ENCODE measurements at regions of chr15 and their contacts with region 1.

Region 1: DNA sequence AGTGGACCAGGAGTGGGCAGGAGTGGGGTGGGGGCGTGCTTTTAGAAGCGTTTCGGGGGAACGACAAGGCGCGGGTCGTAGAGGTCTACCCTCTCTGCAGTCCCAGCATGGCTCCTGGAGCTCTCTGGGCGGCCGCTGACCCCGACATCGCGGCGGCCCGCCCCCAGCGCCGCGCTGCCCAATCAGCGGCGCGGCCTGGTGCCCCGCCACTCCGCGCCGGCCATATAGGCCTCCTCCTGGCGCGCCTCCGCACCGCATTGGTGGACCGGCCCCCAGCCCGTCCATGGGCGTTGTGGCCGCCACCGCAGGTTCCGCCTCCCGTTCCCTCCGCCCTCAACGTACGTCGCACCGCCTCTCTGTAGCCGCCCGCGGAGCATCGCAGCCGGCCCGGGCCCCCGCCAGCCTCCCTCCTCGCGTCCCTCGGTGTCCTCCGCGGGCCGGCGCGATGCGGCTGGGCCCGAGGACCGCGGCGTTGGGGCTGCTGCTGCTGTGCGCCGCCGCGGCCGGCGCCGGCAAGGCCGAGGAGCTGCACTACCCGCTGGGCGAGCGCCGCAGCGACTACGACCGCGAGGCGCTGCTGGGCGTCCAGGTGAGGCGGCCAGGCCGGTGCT is at the start of gene RCN2:
- DNase-seq: peak; percentile 84 to 96 (median 91)
- ATAC-seq: peak; percentile 98
- H3K4me3 ChIP-seq: peak within 1 kb of the TSS; percentile 59
- H3K4me3 Mint-ChIP-seq: peak within 1 kb of the TSS; percentile 98
- H3K27ac ChIP-seq: peak within 1 kb of the TSS in 1 of 2 donors; percentile 53
- H3K27ac Mint-ChIP-seq: peak within 1 kb of the TSS; percentile 91
- H3K4me1 ChIP-seq: peaks cover 6% of the 10 kb centered on the region
- H3K4me1 Mint-ChIP-seq: peaks cover 41% of the 10 kb centered on the region
- H3K27me3 ChIP-seq: no peaks in the 10 kb centered on the region
- H3K27me3 Mint-ChIP-seq: peaks cover 1% of the 10 kb centered on the region
- CTCF ChIP-seq: no peak
- total RNA-seq, gene RCN2: 18.1 to 19.1 TPM

Region 2: DNA sequence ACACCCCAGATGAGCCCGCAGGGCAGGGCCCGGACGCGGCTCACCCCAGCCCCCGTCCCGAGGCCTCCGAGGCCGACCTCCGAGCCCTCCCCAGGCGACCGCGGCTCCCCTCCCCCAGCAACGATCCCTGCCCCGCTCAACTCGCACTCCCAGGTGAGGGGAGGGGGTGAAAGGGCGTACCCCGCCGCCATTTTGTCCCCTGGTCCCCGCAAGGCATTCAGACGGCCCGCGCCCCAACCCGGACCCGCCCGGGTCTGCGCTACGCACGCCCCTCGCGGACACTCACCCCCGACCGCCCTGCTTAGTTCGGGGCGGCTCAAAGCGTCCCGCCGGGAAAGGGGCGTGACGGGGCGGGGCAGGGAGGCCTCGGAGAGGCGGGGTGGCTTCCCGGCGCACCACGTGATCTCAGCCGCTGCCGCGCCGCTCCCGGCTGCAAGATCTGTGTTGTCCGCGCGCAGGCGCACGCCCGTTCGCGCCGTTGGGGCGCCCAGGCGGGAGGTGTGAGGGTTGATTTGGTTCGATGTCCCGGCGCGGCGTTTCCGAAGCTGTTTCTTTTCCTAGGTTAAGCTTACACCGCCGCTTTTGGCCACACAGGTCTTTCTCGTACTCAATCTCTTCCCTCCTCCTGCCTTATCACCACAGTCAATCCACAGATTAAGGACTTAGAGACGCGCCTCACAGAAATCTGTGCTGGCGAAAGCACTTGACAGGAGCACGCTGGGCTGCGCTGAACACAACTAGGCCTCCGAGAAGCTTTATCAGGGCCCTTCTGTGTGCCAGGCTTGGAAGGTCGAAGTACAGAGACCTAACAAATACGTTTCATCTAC is 26.3 kb before region 1 on chr15 and contains the start of gene SCAPER:
- CTCF ChIA-PET with region 1: no interaction called
- POLR2A ChIA-PET with region 1: interaction called, 51 read pairs
- intact Hi-C with region 1: loop called (anchors 1 to 2 kb)
- DNase-seq: peak; percentile 77 to 96 (median 90)
- ATAC-seq: peak; percentile 89
- H3K4me3 ChIP-seq: peak within 1 kb of the TSS; percentile 83
- H3K4me3 Mint-ChIP-seq: peak within 1 kb of the TSS; percentile 96
- H3K27ac ChIP-seq: peak within 1 kb of the TSS; percentile 60 to 75
- H3K27ac Mint-ChIP-seq: peak within 1 kb of the TSS; percentile 95
- H3K4me1 ChIP-seq: peaks cover 25% of the 10 kb centered on the region
- H3K4me1 Mint-ChIP-seq: peaks cover 31% of the 10 kb centered on the region
- H3K27me3 ChIP-seq: no peaks in the 10 kb centered on the region
- H3K27me3 Mint-ChIP-seq: no peaks in the 10 kb centered on the region
- CTCF ChIP-seq: no peak
- total RNA-seq, gene SCAPER: 40.3 to 41.2 TPM

Measured in CD4-positive, alpha-beta T cell (primary cell).